Right ventricle myocardium superior (tissue), 1 donor: ENCODE measurements at regions of chr19 and their contacts with region 1.

Region 1: DNA sequence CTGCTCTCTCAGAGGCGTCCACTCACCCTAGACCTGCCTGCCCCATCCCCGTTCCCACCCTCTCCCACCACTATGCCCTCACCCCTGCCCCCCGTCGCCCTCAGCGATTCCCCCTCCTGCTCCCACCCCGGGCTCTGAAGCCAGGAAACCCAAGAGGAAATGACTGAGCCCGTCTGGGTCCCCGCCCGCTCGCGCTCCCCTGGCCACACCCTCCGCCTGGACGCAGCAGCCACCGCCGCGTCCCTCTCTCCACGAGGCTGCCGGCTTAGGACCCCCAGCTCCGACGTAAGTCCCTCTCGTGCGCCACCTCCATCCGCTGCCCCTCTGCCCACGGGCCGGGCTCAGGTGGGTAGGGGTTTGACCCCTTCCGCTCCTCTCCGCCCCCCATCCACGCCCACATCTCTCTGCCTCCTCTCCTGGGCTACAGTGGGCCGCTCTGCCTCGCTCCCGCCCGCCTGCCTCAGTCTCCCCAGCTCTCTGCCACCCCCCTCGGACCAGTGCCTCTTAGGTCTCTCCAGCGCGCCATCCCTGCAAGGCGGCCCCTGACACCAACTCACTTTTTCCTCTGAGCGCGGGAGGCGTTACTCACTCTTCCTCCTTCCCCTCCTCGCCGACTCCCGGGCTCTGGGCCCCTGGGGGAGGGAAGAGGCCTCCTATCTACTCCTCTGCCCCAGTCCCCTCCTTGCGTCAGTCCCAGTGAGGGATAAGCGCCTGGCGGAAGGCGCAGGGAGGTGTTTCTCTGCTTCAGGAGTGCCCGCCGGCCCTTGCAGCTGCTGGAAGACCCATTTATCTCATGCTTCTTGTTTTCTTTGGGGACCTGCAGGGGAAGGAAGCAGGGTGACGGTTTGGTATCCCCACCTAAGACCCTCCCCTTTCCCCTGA is at the start of gene FXYD5:
- DNase-seq: peak; percentile 81
- ATAC-seq: peak; percentile 87
- total RNA-seq, gene FXYD5: 20.9 TPM

Region 2: DNA sequence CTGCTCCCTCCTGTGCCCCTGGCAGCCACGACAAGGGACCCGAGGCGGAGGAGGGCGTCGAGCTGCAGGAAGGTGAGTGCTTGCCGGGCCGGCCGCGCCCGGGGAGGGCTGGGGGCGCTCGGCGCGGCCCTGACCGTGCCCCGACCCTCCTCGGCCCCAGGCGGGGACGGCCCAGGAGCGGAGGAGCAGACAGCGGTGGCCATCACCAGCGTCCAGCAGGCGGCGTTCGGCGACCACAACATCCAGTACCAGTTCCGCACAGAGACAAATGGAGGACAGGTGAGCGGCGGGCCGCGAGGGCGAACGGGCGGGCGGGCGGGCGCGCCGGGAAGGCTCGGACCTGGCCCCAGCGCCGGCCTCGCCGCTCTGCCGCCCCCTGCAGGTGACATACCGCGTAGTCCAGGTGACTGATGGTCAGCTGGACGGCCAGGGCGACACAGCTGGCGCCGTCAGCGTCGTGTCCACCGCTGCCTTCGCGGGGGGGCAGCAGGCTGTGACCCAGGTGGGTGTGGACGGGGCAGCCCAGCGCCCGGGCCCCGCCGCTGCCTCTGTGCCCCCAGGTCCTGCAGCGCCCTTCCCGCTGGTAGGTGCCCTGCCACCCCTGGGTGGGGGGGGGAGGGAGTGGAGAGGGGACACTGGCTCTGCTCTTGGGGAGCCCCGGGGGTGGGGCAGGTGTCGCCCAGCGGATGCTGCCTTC is 114.8 kb after region 1 on chr19:
- intact Hi-C with region 1: loop called (anchors 5 kb)
- DNase-seq: peak; percentile 93
- ATAC-seq: peak; percentile 59